Colonic mucosa (tissue), 4 donors: ENCODE measurements at regions of chr1 and their contacts with region 1.

Region 1: GRCh38 chr1:110455151-110455550 is 4.2 kb downstream of the PROK1 start:
- DNase-seq: no peak
- H3K4me3 ChIP-seq: no peak overlapping the region
- H3K27ac ChIP-seq: no peak overlapping the region
- H3K4me1 ChIP-seq: no peaks in the 10 kb centered on the region
- H3K27me3 ChIP-seq: no peaks in the 10 kb centered on the region
- CTCF ChIP-seq: no peak

Region 2: GRCh38 chr1:110161877-110162276 is 293.3 kb before region 1 on chr1:
- intact Hi-C with region 1: no loop called
- DNase-seq: no peak
- H3K4me3 ChIP-seq: no peak overlapping the region
- H3K27ac ChIP-seq: no peak overlapping the region
- H3K4me1 ChIP-seq: no peaks in the 10 kb centered on the region
- H3K27me3 ChIP-seq: no peaks in the 10 kb centered on the region
- CTCF ChIP-seq: no peak

Region 3: GRCh38 chr1:110412576-110412975 is 42.6 kb before region 1 on chr1:
- intact Hi-C with region 1: loop called (anchors 5 kb)
- DNase-seq: peak; percentile 68
- H3K4me3 ChIP-seq: no peak overlapping the region
- H3K27ac ChIP-seq: no peak overlapping the region
- H3K4me1 ChIP-seq: no peaks in the 10 kb centered on the region
- H3K27me3 ChIP-seq: no peaks in the 10 kb centered on the region
- CTCF ChIP-seq: peak; percentile 60